B cell (primary cell): ENCODE measurements at regions of chr7 and their contacts with region 1.

Region 1: GRCh38 chr7:128209229-128210035 is 31.6 kb upstream of the LEP start:
- DNase-seq: peak; percentile 85
- ATAC-seq: peak; percentile 88
- H3K4me3 ChIP-seq: no peak overlapping the region
- H3K4me3 Mint-ChIP-seq: no peak overlapping the region
- H3K27ac ChIP-seq: no peak overlapping the region
- H3K27ac Mint-ChIP-seq: no peak overlapping the region
- H3K4me1 ChIP-seq: peaks cover 0 to 7% of the 10 kb centered on the region in 2 donors
- H3K4me1 Mint-ChIP-seq: no peaks in the 10 kb centered on the region
- H3K27me3 ChIP-seq: peaks cover 0 to 4% (median 1%) of the 10 kb centered on the region in 4 experiments
- H3K27me3 Mint-ChIP-seq: peaks cover 19% of the 10 kb centered on the region
- CTCF ChIP-seq: peak; percentile 94

Region 2: GRCh38 chr7:127692200-127692599 is 517.2 kb before region 1 on chr7:
- CTCF ChIA-PET with region 1: interaction called, 11 read pairs
- POLR2A ChIA-PET with region 1: no interaction called
- intact Hi-C with region 1: no loop called
- DNase-seq: no peak
- ATAC-seq: no peak
- H3K4me3 ChIP-seq: no peak overlapping the region
- H3K4me3 Mint-ChIP-seq: no peak overlapping the region
- H3K27ac ChIP-seq: no peak overlapping the region
- H3K27ac Mint-ChIP-seq: no peak overlapping the region
- H3K4me1 ChIP-seq: peaks cover 9 to 10% of the 10 kb centered on the region in 2 donors
- H3K4me1 Mint-ChIP-seq: peaks cover 16% of the 10 kb centered on the region
- H3K27me3 ChIP-seq: no peaks in the 10 kb centered on the region
- H3K27me3 Mint-ChIP-seq: no peaks in the 10 kb centered on the region
- CTCF ChIP-seq: no peak

Region 3: GRCh38 chr7:127726476-127726875 is 483.0 kb before region 1 on chr7:
- CTCF ChIA-PET with region 1: interaction called, 13 read pairs
- POLR2A ChIA-PET with region 1: no interaction called
- intact Hi-C with region 1: no loop called
- DNase-seq: no peak
- ATAC-seq: no peak
- H3K4me3 ChIP-seq: no peak overlapping the region
- H3K4me3 Mint-ChIP-seq: no peak overlapping the region
- H3K27ac ChIP-seq: no peak overlapping the region
- H3K27ac Mint-ChIP-seq: no peak overlapping the region
- H3K4me1 ChIP-seq: no peaks in the 10 kb centered on the region
- H3K4me1 Mint-ChIP-seq: no peaks in the 10 kb centered on the region
- H3K27me3 ChIP-seq: no peaks in the 10 kb centered on the region
- H3K27me3 Mint-ChIP-seq: no peaks in the 10 kb centered on the region
- CTCF ChIP-seq: no peak

Region 4: DNA sequence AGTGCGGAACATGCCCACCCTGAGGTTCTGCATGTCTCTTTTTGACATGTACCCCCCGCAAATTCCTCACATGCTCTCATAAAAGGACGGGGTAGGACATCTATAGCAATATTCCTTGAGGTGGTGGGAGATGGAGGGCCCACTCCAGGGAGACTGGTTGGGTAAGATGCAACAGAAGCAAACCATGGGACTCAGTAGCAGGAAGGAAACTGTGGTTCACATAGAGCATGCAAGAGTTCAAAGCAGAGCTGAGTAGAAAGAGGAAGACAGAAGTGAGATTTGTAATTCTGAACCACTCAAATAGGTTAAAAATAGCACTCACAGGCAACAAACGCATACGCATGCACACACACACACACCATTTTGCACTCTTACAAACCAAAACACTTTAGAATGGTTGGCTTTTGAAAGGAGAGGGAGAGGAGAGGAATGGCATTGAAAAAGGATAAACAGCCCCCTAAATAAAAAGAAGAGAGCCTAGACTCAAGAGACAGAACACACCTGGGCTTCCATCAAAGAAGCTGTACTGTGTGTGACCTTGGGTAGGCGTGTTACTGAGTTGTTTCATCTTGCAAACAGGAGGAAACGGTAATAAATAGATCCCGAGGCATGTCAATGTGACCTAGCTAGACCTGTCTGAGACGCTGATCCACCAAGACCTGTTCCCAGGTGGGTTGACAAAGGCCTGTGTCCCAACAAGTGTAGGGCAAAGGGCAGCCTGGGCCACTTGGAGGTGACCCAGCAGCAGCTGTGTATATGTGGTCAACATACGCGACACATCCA is 100.6 kb before region 1 on chr7:
- CTCF ChIA-PET with region 1: interaction called, 18 read pairs
- POLR2A ChIA-PET with region 1: interaction called, 6 read pairs
- intact Hi-C with region 1: no loop called
- DNase-seq: peak; percentile 75
- ATAC-seq: peak; percentile 69
- H3K4me3 ChIP-seq: peak overlapping the region in 4 of 5 experiments; percentile 8 to 27 (median 12)
- H3K4me3 Mint-ChIP-seq: peak overlapping the region; percentile 77
- H3K27ac ChIP-seq: peak overlapping the region; percentile 78 to 89
- H3K27ac Mint-ChIP-seq: peak overlapping the region; percentile 90
- H3K4me1 ChIP-seq: peaks cover 78 to 89% of the 10 kb centered on the region in 2 donors
- H3K4me1 Mint-ChIP-seq: peaks cover 79% of the 10 kb centered on the region
- H3K27me3 ChIP-seq: no peaks in the 10 kb centered on the region
- H3K27me3 Mint-ChIP-seq: no peaks in the 10 kb centered on the region
- CTCF ChIP-seq: no peak

Region 5: DNA sequence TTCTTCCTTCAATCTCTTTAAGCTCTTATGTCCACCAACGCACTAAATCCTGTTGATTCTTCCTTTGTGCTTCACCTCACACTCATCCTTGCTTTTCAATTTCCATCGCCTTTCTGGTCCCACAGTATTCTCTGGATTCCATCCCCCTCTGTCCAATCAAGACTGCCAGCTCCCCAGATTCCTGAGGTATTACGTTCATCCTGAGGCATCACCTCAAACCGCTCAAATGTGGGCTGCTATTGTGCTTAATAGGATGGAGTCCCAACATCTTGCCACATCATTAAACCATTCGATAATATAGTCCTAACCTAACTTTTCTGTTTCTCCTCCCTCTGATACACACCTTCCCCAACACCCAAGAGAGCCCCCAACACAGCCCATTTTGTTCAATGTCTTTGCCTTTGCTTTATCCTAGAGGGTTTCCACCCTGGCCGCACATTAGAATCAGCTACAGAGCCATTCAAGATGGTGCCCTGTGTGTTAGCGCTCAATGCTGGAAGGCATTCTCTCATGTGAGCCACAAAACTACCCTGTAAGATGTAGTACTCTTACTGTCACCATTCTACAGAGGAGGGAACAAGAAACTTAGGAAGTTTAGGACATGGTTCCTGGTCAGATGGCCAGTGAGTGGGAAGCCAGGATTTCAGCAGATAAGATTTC is 47.8 kb before region 1 on chr7:
- CTCF ChIA-PET with region 1: interaction called, 14 read pairs
- POLR2A ChIA-PET with region 1: no interaction called
- intact Hi-C with region 1: no loop called
- DNase-seq: no peak
- ATAC-seq: no peak
- H3K4me3 ChIP-seq: no peak overlapping the region
- H3K4me3 Mint-ChIP-seq: no peak overlapping the region
- H3K27ac ChIP-seq: no peak overlapping the region
- H3K27ac Mint-ChIP-seq: no peak overlapping the region
- H3K4me1 ChIP-seq: peaks cover 10 to 16% of the 10 kb centered on the region in 2 donors
- H3K4me1 Mint-ChIP-seq: peaks cover 13% of the 10 kb centered on the region
- H3K27me3 ChIP-seq: peaks cover 0 to 52% (median 33%) of the 10 kb centered on the region in 4 experiments
- H3K27me3 Mint-ChIP-seq: peaks cover 77% of the 10 kb centered on the region
- CTCF ChIP-seq: no peak